Tibial artery (tissue), 4 donors: ENCODE measurements at regions of chr2 and their contacts with region 1.

Region 1: DNA sequence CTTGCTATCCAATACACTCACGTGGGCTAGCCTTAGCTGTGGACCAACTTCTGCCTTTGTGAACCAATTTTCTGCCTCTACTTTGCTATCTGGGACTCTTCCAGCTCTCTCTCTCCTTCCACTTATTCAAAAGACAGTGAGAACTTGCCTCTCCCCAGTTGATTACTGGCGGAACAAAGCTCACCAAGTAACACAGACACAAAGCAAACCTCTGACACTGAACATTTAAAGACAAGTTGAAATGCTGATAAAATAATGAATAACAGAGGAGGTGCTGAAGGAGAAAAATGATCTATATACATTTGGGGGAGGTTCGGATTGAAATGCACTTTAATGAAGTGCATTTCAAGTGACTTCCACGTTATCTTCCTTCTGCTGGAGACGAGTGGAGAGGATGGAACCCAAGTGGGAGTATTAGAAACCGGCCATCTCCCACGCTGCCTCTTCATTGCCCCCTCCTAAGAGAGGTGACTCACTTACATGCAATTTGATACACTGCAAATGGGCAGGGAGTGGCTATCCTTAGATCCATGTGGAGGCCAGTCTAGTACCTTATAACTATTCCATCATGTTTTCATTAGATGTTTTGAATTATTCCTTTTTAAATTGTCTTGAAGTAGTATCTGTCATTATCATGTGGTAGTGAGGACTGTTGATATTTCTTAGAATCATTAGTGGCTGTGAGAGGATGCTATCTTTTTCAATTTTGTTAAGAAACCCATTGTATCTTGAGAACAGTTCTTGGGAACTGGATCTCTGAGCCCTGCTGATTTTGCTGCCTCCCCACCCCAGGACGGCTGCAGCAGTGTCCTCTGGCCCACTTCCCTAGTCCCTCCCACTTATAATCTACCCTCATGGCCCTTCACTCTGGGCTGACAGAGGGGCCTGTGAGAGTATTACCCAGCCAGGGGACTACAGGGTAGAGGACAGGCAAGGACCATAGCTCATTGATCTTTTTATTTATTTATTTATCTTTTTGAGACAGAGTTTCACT is 6.0 kb upstream of the GLI2 start:
- DNase-seq: peak in 1 of 2 donors; percentile 24
- H3K4me3 ChIP-seq: no peak overlapping the region
- H3K27ac ChIP-seq: no peak overlapping the region
- H3K4me1 ChIP-seq: peaks cover 0 to 15% (median 5%) of the 10 kb centered on the region in 4 donors
- H3K27me3 ChIP-seq: no peaks in the 10 kb centered on the region
- CTCF ChIP-seq: no peak

Region 2: DNA sequence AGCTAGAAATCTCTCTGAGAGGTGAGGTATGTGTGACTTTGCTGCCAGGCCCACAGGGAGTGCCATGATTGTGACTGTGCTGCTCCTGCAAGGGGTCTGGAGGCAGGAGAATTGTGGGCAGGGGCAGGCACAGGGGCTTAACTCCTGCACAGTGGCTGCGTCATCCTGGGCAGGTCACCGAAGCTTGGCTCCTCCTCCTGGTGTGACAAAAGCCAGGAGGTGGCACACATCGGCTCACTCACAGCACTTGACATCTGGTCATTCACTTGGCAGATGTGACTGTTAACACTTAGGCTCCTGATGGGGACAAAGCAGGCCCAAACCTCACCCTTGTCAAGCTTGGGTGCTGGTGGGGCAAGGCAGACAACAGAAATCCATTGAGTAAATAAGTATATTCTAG is 30.4 kb before region 1 on chr2:
- intact Hi-C with region 1: loop called (anchors 5 kb)
- DNase-seq: no peak
- H3K4me3 ChIP-seq: no peak overlapping the region
- H3K27ac ChIP-seq: no peak overlapping the region
- H3K4me1 ChIP-seq: peaks cover 0 to 7% (median 0%) of the 10 kb centered on the region in 4 donors
- H3K27me3 ChIP-seq: peaks cover 0 to 16% of the 10 kb centered on the region in 2 donors
- CTCF ChIP-seq: no peak